ENCODE measurements at regions of chr5 and their contacts with region 1.

Region 1: DNA sequence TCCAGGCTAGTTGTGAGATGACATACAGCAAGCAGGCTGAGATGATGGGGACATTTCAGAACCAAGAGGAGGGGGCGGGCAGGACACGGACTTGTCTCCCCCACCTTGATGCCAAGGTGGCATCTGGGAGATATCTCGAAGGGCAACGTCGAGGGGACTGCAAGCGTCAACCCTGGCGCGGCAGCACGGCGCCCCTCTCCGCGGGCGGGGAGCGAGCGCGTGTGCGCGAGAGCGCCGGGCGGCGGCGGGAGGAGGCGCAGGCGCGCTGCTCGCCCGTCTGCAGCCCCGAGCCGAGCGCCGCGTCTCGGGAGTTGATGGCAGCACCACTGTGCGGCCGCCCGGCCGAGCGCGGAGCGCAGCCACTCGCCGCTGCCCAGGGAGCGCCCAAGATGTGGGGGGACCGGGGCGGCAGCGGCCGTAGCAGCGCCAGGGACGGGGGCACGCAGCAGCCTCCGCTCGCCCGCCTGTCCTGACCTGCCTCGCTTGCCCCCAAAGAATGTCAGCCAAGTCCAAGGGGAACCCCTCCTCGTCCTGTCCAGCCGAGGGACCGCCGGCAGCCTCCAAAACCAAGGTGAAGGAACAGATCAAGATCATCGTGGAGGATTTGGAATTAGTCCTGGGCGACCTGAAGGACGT is at the start of gene PRR16:
- DNase-seq: peak; percentile 79
- H3K4me3 Mint-ChIP-seq: peak within 1 kb of the TSS; percentile 85
- H3K27ac Mint-ChIP-seq: peak within 1 kb of the TSS; percentile 6
- H3K4me1 Mint-ChIP-seq: peaks cover 39% of the 10 kb centered on the region
- H3K27me3 Mint-ChIP-seq: no peaks in the 10 kb centered on the region
- CTCF ChIP-seq: no peak
- total RNA-seq, gene PRR16: 11.9 and 18.9 TPM in 2 replicates

Region 2: DNA sequence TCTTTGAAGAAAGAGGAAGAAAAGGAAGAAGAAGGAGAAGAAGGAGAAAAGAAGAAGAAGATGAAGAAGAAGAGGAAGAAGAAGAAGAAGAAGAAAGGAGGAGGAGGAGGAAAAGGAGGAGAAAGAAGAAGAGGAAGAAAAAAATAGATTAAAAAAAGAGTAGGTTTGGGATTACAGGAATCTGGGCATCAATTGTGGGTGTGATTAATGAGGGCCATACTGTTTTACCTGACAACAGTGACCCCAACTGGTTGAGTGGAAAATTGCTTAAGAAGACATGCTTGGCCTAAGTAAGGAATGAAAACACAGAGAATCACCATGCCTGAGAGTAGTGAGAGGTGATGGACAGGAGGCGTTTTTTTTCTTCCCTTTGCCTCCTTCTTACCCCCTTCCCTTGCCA is 720.2 kb before region 1 on chr5:
- CTCF ChIA-PET with region 1: no interaction called
- POLR2A ChIA-PET with region 1: no interaction called
- intact Hi-C with region 1: loop called (anchors 10 kb)
- DNase-seq: peak; percentile 89
- H3K4me3 Mint-ChIP-seq: no peak overlapping the region
- H3K27ac Mint-ChIP-seq: no peak overlapping the region
- H3K4me1 Mint-ChIP-seq: no peaks in the 10 kb centered on the region
- H3K27me3 Mint-ChIP-seq: no peaks in the 10 kb centered on the region
- CTCF ChIP-seq: peak; percentile 58

Region 3: GRCh38 chr5:119943148-119943547 is 521.0 kb before region 1 on chr5:
- CTCF ChIA-PET with region 1: interaction called, 37 read pairs
- POLR2A ChIA-PET with region 1: no interaction called
- intact Hi-C with region 1: no loop called
- DNase-seq: peak; percentile 33
- H3K4me3 Mint-ChIP-seq: no peak overlapping the region
- H3K27ac Mint-ChIP-seq: no peak overlapping the region
- H3K4me1 Mint-ChIP-seq: peaks cover 11% of the 10 kb centered on the region
- H3K27me3 Mint-ChIP-seq: no peaks in the 10 kb centered on the region
- CTCF ChIP-seq: peak; percentile 34

Region 4: DNA sequence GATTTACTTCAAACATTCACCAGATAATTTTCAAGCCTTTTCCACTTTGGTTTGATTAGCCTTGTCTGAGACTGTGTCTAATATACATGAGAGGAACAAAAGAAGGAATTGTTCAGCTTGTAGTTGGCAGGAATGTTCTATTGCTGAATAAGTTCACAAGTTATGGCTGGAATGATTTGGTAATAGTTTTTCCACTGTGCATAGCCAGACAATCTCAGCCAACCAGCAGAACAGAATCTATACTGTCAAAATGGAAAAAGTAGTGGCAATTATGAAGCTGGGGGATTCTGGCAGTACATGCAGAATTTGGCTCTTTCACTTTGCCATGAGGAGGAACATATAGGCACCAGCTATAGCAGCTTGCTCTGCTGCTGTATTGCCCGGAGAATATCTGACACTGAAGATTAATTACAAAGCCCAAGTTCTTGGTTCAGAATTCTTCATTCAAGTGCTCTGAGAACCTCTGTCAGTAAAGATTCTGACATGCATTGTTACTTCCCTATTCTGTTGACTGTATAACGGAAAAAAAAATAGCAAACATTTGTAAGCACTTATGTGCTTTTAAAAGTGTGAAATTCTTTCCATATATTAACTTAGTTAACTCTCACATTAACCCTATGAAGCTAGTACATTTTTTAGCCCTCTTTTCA is 150.5 kb after region 1 on chr5:
- CTCF ChIA-PET with region 1: interaction called, 3 read pairs
- POLR2A ChIA-PET with region 1: no interaction called
- intact Hi-C with region 1: loop called (anchors 5 kb)
- DNase-seq: peak; percentile 49
- H3K4me3 Mint-ChIP-seq: peak overlapping the region; percentile 43
- H3K27ac Mint-ChIP-seq: peak overlapping the region; percentile 93
- H3K4me1 Mint-ChIP-seq: peaks cover 41% of the 10 kb centered on the region
- H3K27me3 Mint-ChIP-seq: no peaks in the 10 kb centered on the region
- CTCF ChIP-seq: no peak

Measured in MCF 10A (cell line).